ENCODE measurements at regions of chr2 and their contacts with region 1.

Region 1: DNA sequence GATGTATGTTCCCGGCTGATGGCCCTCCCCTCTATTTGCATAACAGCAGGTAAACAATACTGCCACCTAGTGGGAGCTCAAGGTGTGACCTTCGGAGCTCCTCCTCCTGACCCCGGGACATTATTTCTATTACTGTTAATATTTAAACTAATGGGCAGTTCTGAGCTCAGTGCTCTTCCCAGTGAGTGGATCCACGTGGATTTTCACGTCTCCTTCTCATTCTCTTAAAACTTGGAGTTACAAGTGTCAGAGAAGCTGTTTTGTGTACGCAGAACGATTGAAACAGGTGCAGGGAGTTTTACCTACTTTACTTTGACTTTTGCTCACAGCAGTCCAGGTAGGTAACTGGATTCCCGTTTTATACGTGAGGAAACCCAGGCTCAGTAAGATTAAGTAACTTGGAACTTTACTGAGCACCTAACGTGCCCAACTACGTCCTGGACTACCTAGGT is 127.3 kb downstream of the PRKCE start:
- DNase-seq: peak; percentile 78
- ATAC-seq: peak; percentile 90
- H3K4me3 Mint-ChIP-seq: no peak overlapping the region
- H3K27ac Mint-ChIP-seq: no peak overlapping the region
- H3K4me1 Mint-ChIP-seq: peaks cover 3% of the 10 kb centered on the region
- H3K27me3 Mint-ChIP-seq: no peaks in the 10 kb centered on the region

Region 2: GRCh38 chr2:44981136-44982108 is 797.3 kb before region 1 on chr2:
- CTCF ChIA-PET with region 1: no interaction called
- POLR2A ChIA-PET with region 1: no interaction called
- intact Hi-C with region 1: loop called in 1 of 2 experiments (anchors 2 kb)
- DNase-seq: peak; percentile 84
- ATAC-seq: peak; percentile 58
- H3K4me3 Mint-ChIP-seq: no peak overlapping the region
- H3K27ac Mint-ChIP-seq: no peak overlapping the region
- H3K4me1 Mint-ChIP-seq: peaks cover 2% of the 10 kb centered on the region
- H3K27me3 Mint-ChIP-seq: peaks cover 14% of the 10 kb centered on the region

Region 3: GRCh38 chr2:45643543-45644542 is 134.9 kb before region 1 on chr2:
- CTCF ChIA-PET with region 1: interaction called, 63 read pairs
- POLR2A ChIA-PET with region 1: no interaction called
- intact Hi-C with region 1: loop called (anchors 1 kb)
- DNase-seq: peak; percentile 84
- ATAC-seq: peak; percentile 99
- H3K4me3 Mint-ChIP-seq: peak overlapping the region; percentile 32
- H3K27ac Mint-ChIP-seq: no peak overlapping the region
- H3K4me1 Mint-ChIP-seq: peaks cover 3% of the 10 kb centered on the region
- H3K27me3 Mint-ChIP-seq: peaks cover 20% of the 10 kb centered on the region

Region 4: GRCh38 chr2:45765007-45765727 is 13.6 kb before region 1 on chr2:
- CTCF ChIA-PET with region 1: interaction called, 10 read pairs
- POLR2A ChIA-PET with region 1: no interaction called
- intact Hi-C with region 1: no loop called
- DNase-seq: no peak
- ATAC-seq: no peak
- H3K4me3 Mint-ChIP-seq: no peak overlapping the region
- H3K27ac Mint-ChIP-seq: no peak overlapping the region
- H3K4me1 Mint-ChIP-seq: peaks cover 3% of the 10 kb centered on the region
- H3K27me3 Mint-ChIP-seq: no peaks in the 10 kb centered on the region

Region 5: GRCh38 chr2:45935791-45936622 is 157.3 kb after region 1 on chr2:
- CTCF ChIA-PET with region 1: interaction called, 7 read pairs
- POLR2A ChIA-PET with region 1: no interaction called
- intact Hi-C with region 1: loop called (anchors 1 to 10 kb)
- DNase-seq: peak; percentile 75
- ATAC-seq: peak; percentile 85
- H3K4me3 Mint-ChIP-seq: no peak overlapping the region
- H3K27ac Mint-ChIP-seq: no peak overlapping the region
- H3K4me1 Mint-ChIP-seq: peaks cover 4% of the 10 kb centered on the region
- H3K27me3 Mint-ChIP-seq: no peaks in the 10 kb centered on the region